HepG2 (cell line): ENCODE measurements at regions of chr11 and their contacts with region 1.

Region 1: DNA sequence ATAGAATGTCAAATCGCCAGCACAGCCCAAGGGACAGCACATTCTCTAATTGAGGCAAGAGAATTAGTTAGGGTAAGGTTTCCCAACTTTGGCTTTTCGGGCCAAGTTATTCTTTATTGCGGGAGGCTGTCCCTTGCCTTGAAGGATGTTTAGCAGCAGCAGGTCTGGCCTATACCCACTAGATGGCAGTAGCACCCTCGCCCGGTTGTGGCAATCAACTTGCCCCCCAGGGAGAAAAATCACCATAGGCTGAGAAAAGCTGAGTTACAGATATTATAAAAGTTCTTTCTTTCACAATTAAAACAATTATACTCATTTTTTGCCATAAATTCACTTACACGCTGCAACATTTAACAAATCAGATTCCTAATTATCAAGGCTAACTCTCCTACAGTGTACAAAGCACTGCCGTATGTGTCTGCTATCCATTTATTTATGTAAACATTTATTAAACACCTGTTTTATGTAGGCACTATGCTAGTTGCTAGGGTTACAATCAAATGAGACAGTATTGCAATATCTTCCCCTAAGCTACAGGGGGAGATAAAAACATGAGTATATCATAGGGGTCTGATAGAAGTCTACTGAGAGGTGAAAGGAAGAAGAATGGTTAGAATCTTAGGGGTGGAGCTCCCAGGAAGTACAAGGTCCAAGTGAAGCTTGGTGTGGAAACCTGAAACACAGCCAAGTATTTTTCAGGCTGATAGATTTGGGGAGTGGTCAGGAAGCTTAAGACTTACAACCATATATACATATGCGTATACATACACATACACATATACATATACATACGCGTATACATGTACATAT is 452.3 kb downstream of the RAB38 start:
- DNase-seq: peak; percentile 7
- ATAC-seq: peak; percentile 76
- H3K4me3 ChIP-seq: no peak overlapping the region
- H3K27ac ChIP-seq: no peak overlapping the region
- H3K4me1 ChIP-seq: no peaks in the 10 kb centered on the region
- H3K27me3 ChIP-seq: no peaks in the 10 kb centered on the region
- CTCF ChIP-seq: peak; percentile 61
- EP300 ChIP-seq: no peak
- POLR2A ChIP-seq: no peak
- RAD21 ChIP-seq: 0 out of 2 replicates have a peak, but pooled peaks have one; percentile 21

Region 2: GRCh38 chr11:87739766-87740165 is 16.8 kb after region 1 on chr11:
- CTCF ChIA-PET with region 1: no interaction called
- POLR2A ChIA-PET with region 1: no interaction called
- in situ Hi-C with region 1: no loop called
- intact Hi-C with region 1: loop called (anchors 1 kb)
- DNase-seq: no peak
- ATAC-seq: no peak
- H3K4me3 ChIP-seq: no peak overlapping the region
- H3K27ac ChIP-seq: no peak overlapping the region
- H3K4me1 ChIP-seq: no peaks in the 10 kb centered on the region; the same call in 1 of the 2 replicates
- H3K27me3 ChIP-seq: no peaks in the 10 kb centered on the region
- CTCF ChIP-seq: no peak
- EP300 ChIP-seq: no peak
- POLR2A ChIP-seq: no peak
- RAD21 ChIP-seq: no peak

Region 3: DNA sequence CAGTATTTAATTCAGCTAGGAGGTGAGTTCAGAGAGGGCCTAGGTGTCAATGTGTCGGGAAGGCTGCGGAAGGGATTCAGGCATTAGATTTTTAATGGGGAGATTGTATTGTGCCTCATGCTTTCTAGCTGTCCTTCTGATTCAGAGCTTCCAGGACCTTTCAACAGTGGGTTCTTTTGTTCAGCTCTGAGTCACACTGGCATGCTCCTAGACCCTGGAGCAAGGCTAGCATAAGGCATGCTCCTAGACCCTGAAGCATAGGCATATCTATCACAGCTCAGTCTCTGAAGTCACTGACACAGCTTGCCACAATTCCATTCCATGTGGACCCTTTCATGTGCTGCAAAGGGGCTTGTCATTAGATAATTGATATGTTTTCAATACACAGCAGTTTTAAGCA is 55.4 kb after region 1 on chr11:
- CTCF ChIA-PET with region 1: no interaction called
- POLR2A ChIA-PET with region 1: no interaction called
- in situ Hi-C with region 1: no loop called
- intact Hi-C with region 1: no loop called
- DNase-seq: no peak
- ATAC-seq: no peak
- H3K4me3 ChIP-seq: no peak overlapping the region
- H3K27ac ChIP-seq: no peak overlapping the region
- H3K4me1 ChIP-seq: no peaks in the 10 kb centered on the region
- H3K27me3 ChIP-seq: no peaks in the 10 kb centered on the region
- CTCF ChIP-seq: no peak
- EP300 ChIP-seq: no peak
- POLR2A ChIP-seq: no peak
- RAD21 ChIP-seq: no peak